ENCODE measurements at regions of chr4 and their contacts with region 1.

Region 1: DNA sequence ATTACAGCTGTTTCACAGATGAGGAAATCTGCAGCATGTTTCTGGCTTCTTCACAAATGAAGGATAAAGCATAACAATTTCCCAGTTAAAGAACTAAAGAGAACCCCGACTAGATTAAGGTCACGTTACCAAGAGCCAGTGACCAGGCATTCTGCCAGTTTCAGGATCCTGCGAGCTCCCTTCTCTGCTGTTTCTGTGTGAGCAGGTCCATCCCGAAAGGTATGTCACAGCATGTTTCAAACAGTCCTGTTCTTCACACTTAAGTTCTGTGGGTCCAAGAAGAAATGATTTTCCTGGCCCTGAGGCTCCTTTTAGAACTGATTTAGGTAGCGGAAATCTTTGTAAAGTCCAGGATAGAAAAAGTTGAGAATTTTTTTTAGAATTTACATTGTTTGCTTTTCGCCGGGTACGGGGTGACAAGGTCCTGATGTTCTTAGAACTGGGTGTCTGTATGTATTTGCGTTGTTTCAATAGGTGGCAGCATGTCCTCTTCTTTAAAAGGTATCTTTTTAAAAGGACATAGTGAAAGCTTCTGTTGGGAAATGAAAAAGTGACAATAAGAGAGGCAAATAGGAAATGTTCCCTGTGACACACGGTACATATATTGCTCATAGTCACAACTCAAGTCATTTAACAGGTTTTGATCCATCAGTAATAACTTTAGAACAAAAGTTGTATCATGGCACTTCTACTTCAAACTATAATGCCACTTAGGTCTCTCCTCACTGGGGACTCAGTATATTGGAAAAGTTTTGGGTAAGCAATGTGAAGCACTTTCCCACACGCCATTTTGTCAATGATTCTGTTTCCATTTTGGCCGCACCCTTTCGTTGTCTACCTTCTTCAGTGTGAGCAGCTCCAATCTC is 18.4 kb downstream of the IL21 start:
- DNase-seq: no peak
- H3K4me3 ChIP-seq: no peak overlapping the region
- H3K27ac ChIP-seq: no peak overlapping the region
- H3K4me1 ChIP-seq: no peaks in the 10 kb centered on the region
- H3K27me3 ChIP-seq: peaks cover 0 to 21% (median 0%) of the 10 kb centered on the region in 4 donors
- CTCF ChIP-seq: peak in 3 of 6 experiments; percentile 13 to 23 (median 18)
- POLR2A ChIP-seq: no peak

Region 2: DNA sequence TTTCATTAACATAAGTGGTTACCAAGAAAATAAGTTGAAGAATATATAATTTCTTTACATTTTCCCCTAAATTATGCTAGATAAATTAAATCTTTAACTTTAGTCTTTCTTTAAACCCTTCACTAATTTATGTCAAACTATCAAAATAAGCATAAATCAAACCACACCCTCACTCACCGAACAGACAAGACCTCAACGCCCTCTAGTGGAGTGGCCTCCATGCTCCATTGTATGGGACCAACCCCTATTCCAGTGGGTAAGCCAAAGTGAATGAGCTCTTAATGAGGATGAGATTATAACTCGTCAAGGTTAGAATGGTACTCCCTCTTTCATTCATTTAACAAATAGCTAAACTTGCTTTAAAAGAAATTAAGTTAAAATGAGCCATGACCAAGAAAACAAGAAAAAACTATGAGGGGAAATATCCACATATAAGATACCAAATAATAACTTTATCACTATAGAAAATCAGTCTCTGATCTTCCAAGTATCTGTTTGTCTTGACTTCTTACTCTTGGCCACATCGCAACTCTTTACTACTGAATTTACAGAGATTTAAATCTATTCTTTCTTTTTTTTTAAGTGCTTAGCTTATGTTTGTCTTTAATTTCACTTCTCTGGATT is 114.4 kb after region 1 on chr4:
- intact Hi-C with region 1: loop called (anchors 5 kb)
- DNase-seq: no peak
- H3K4me3 ChIP-seq: no peak overlapping the region
- H3K27ac ChIP-seq: no peak overlapping the region
- H3K4me1 ChIP-seq: no peaks in the 10 kb centered on the region
- H3K27me3 ChIP-seq: no peaks in the 10 kb centered on the region
- CTCF ChIP-seq: peak in 5 of 6 experiments; percentile 40 to 77 (median 63)
- POLR2A ChIP-seq: no peak

Region 3: DNA sequence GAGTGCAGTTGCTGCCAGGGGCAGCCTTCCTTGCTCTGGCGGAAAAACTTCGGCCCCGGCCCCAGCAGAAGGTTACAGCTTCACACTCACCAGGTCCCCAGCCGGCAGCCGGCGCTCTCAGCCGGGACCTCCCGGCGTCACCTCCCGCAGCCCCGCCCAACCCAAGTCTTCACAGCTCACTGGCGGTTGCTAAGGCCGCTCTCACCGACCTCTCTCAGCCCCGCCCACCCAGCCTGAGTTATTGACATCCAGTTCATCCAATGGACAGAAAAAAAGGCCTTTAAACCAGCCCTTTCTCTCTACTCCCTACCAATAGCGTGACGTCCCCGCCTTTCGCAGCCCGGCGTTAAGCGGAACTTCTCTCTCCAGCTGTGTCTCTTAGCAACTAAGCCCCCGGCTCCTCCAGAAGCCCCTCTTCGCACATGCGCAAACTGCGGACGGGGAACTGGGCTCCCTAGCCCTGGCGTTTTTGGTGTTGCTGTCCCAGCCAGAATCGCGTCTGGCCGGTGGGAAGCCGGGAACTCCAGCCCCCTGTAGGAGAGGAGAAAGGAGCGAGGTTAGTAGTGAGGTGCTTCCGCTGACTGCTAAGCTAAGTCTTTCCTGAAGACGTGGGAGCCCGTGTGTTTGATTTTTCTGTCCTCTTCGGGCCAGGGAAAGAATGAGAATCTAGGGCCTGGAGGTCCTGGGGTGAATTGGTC is 130.0 kb after region 1 on chr4 and contains the start of gene BBS12:
- intact Hi-C with region 1: no loop called
- DNase-seq: peak; percentile 95
- H3K4me3 ChIP-seq: peak within 1 kb of the TSS; percentile 52 to 92 (median 72)
- H3K27ac ChIP-seq: peak within 1 kb of the TSS; percentile 78 to 93 (median 92)
- H3K4me1 ChIP-seq: peaks cover 7 to 22% (median 10%) of the 10 kb centered on the region in 3 donors
- H3K27me3 ChIP-seq: no peaks in the 10 kb centered on the region
- CTCF ChIP-seq: peak in 1 of 6 experiments; percentile 25
- POLR2A ChIP-seq: peak in 1 of 4 donors; percentile 34
- total RNA-seq, gene BBS12: 0.49 to 2.5 (median 1.0) TPM

Region 4: GRCh38 chr4:122930862-122931261 is 328.4 kb after region 1 on chr4:
- intact Hi-C with region 1: loop called (anchors 10 kb)
- DNase-seq: no peak
- H3K4me3 ChIP-seq: no peak overlapping the region
- H3K27ac ChIP-seq: no peak overlapping the region
- H3K4me1 ChIP-seq: no peaks in the 10 kb centered on the region
- H3K27me3 ChIP-seq: no peaks in the 10 kb centered on the region
- CTCF ChIP-seq: peak in 4 of 6 experiments; percentile 35 to 68 (median 59)
- POLR2A ChIP-seq: no peak

Region 5: GRCh38 chr4:122963216-122963615 is 360.7 kb after region 1 on chr4:
- intact Hi-C with region 1: no loop called
- DNase-seq: no peak
- H3K4me3 ChIP-seq: no peak overlapping the region
- H3K27ac ChIP-seq: no peak overlapping the region
- H3K4me1 ChIP-seq: peaks cover 0 to 11% (median 0%) of the 10 kb centered on the region in 3 donors
- H3K27me3 ChIP-seq: no peaks in the 10 kb centered on the region
- CTCF ChIP-seq: no peak
- POLR2A ChIP-seq: no peak